Activated CD4-positive, alpha-beta memory T cell treated with anti-CD3 and anti-CD28 coated beads for 36 hours (primary cell): ENCODE measurements at regions of chr1 and their contacts with region 1.

Region 1: DNA sequence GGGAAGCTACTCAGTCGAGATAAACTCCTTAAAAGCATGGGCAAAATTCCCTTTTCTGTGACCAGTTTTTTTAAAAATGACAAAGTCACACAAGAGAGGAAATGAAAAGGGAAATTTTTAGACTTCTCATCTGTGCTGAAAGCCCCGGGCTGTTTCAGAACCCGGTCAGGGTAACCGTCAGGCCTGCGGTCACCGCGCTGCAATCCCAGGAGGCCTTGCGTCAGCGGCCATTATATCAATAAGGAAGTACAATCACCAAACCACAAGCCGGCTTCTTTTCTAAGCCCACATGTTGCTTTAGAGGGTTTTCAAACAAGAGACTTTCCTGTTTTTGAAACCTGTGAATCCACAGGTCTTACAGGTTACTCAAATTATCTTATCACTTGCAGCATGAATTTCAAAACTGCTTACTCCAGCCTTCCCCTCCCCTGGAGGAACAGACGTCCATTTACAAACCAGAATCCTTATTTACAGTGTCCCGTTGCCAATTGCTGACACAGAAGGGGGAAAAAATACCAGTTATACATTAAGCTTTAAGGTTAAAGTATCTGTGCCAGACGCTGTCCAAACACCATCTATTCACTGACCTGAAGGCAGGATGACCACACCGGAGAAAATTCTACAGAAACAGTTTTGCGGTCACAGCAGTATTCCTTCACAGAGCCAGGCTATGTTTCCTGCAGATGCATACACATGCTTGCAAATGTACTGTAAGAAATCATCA is 165.3 kb downstream of the TOMM20 start:
- DNase-seq: peak; percentile 97
- H3K4me3 Mint-ChIP-seq: peak overlapping the region; percentile 63
- H3K27ac Mint-ChIP-seq: peak overlapping the region; percentile 98
- H3K4me1 Mint-ChIP-seq: peaks cover 67% of the 10 kb centered on the region
- H3K27me3 Mint-ChIP-seq: no peaks in the 10 kb centered on the region

Region 2: GRCh38 chr1:233113009-233113879 is 1850.1 kb before region 1 on chr1:
- CTCF ChIA-PET with region 1: no interaction called
- POLR2A ChIA-PET with region 1: no interaction called
- intact Hi-C with region 1: no loop called
- DNase-seq: peak; percentile 65
- H3K4me3 Mint-ChIP-seq: no peak overlapping the region
- H3K27ac Mint-ChIP-seq: peak overlapping the region; percentile 6
- H3K4me1 Mint-ChIP-seq: peaks cover 8% of the 10 kb centered on the region
- H3K27me3 Mint-ChIP-seq: no peaks in the 10 kb centered on the region

Region 3: GRCh38 chr1:234730770-234731568 is 232.4 kb before region 1 on chr1:
- CTCF ChIA-PET with region 1: interaction called, 5 read pairs
- POLR2A ChIA-PET with region 1: no interaction called
- intact Hi-C with region 1: loop called (anchors 1 kb)
- DNase-seq: peak; percentile 78
- H3K4me3 Mint-ChIP-seq: peak overlapping the region; percentile 40
- H3K27ac Mint-ChIP-seq: peak overlapping the region; percentile 99
- H3K4me1 Mint-ChIP-seq: peaks cover 77% of the 10 kb centered on the region
- H3K27me3 Mint-ChIP-seq: no peaks in the 10 kb centered on the region

Region 4: DNA sequence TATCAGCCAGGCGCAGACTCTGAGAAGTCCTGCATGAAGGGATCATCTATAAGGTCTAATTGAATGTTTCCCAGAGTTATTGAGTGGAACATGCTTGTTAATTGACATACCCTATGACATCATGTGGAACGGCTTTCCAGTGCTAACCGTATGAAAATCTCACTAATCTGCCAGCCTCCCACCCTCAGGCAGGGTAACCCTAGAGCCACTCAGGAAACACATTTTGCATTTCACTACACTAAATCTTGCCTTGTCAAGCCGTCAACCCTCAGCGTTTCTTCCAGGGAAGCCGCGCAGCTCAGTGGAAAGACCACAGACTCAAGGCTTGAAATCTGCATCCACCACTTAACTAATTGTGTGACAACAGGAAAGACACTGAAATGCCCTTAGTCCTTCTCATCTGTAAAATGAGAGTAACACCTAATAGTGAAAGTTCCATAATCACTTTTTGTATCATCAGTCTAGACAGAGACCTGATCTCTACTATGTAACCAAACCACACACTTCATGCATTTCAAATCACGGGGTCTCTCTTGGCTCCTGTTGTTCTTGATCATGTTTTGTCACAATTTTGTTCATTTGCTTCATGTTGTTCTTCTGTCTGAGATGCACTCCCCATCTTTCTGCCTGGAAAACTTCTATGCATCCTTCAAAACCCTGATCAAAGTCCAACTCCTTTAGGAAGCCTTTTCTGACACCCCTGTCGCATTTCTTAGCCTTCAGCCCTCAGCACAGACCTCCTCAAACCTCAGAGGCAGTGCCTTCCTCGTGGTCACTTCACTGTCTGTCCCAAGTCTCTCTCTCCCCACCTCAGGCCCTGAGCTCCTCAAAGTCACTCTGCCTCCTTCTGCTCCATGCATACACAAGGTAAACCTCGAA is 81.2 kb before region 1 on chr1:
- CTCF ChIA-PET with region 1: no interaction called
- POLR2A ChIA-PET with region 1: interaction called, 3 read pairs
- intact Hi-C with region 1: loop called (anchors 1 kb)
- DNase-seq: peak; percentile 72
- H3K4me3 Mint-ChIP-seq: no peak overlapping the region
- H3K27ac Mint-ChIP-seq: peak overlapping the region; percentile 59
- H3K4me1 Mint-ChIP-seq: peaks cover 40% of the 10 kb centered on the region
- H3K27me3 Mint-ChIP-seq: no peaks in the 10 kb centered on the region

Region 5: GRCh38 chr1:234933475-234933874 is 29.9 kb before region 1 on chr1:
- CTCF ChIA-PET with region 1: no interaction called
- POLR2A ChIA-PET with region 1: no interaction called
- intact Hi-C with region 1: loop called (anchors 1 kb)
- DNase-seq: peak; percentile 63
- H3K4me3 Mint-ChIP-seq: no peak overlapping the region
- H3K27ac Mint-ChIP-seq: peak overlapping the region; percentile 86
- H3K4me1 Mint-ChIP-seq: peaks cover 66% of the 10 kb centered on the region
- H3K27me3 Mint-ChIP-seq: no peaks in the 10 kb centered on the region

Region 6: GRCh38 chr1:235018161-235018560 is 54.8 kb after region 1 on chr1:
- CTCF ChIA-PET with region 1: no interaction called
- POLR2A ChIA-PET with region 1: interaction called, 6 read pairs
- intact Hi-C with region 1: loop called (anchors 1 kb)
- DNase-seq: no peak
- H3K4me3 Mint-ChIP-seq: no peak overlapping the region
- H3K27ac Mint-ChIP-seq: peak overlapping the region; percentile 66
- H3K4me1 Mint-ChIP-seq: peaks cover 74% of the 10 kb centered on the region
- H3K27me3 Mint-ChIP-seq: no peaks in the 10 kb centered on the region